ENCODE measurements at regions of chr2 and their contacts with region 1.

Region 1: GRCh38 chr2:218691234-218691633 is 19.3 kb downstream of the STK36 start:
- DNase-seq: no peak

Region 2: DNA sequence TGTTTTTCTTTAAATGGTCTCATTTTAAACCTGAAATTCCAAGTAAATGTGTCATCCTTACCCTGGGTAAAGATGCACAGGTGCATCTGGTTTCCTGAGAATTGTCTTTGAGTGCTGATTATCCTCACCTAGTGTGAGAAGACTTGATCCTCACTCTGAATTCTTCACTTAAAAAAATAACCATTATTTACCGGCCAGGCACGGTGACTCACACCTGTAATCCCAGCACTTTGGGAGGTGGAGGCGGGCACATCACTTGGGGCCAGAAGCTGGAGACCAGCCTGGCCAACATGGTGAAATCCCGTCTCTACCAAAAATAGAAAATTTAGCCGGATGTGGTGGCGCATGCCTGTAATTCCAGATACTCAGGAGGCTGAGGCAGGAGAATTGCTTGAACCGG is 158.5 kb after region 1 on chr2:
- intact Hi-C with region 1: loop called (anchors 5 kb)
- DNase-seq: no peak

Measured in cardiac septum (tissue), 1 donor.